Head of caudate nucleus (tissue), 42 donors: ENCODE measurements at regions of chr16 and their contacts with region 1.

Region 1: GRCh38 chr16:2340564-2341455 is at the start of gene ABCA3:
- DNase-seq: peak; percentile 77 to 98 (median 93)

Region 2: GRCh38 chr16:2459647-2460390 is 119.0 kb after region 1 on chr16 and contains the start of gene TEDC2:
- intact Hi-C with region 1: no loop called
- DNase-seq: peak; percentile 91 to 100 (median 98)

Region 3: DNA sequence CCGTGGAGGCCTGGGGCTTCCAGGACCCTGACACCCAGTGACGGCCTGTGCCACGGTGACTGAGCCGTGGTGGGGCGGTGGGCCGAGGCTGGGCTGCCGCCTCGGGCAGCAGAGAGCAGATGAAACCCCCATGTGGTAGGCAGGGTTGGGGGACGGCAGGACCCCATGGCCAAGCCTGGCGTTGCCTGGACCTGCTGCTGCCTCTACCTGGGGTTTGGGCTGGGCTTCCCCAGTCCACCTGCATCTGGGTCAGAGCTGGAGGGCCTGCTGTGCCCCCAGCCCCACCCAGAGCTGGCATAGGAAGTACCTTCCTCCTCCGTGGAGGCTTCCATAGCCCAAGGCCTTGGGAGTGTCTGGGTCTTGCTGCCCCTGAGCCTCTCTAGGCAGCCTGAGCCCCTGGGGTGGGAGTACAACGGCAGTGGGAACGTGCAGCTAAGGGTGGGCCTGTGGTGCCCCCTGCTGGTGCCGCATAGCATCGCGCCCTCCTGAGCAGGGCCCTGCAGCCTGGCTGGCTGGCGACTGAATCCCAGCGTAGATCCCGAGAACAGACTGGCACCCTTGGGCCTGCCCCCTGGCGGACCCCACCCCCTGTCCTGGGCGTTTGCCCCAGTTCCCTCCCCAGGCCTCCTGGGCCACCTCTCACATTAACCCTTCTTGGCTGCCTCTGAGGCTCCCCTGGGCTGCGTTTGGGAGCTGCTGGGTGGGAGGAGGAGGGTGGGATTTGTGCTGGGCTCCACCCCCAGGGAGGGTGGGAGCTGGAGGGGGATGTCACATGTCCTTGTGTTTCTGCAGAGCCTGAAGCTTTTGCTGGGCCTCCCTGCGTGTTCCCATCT is 160.3 kb after region 1 on chr16:
- intact Hi-C with region 1: loop called (anchors 5 kb)
- DNase-seq: peak; percentile 83 to 96 (median 91)